HepG2 (cell line): ENCODE measurements at regions of chr5 and their contacts with region 1.

Region 1: GRCh38 chr5:112419986-112420864 is 1.1 kb upstream of the EPB41L4A start:
- DNase-seq: peak; percentile 41
- ATAC-seq: peak; percentile 99
- H3K4me3 ChIP-seq: peak overlapping the region; percentile 42 to 79 (median 75)
- H3K27ac ChIP-seq: no peak overlapping the region
- H3K4me1 ChIP-seq: 0 out of 2 replicates have a peak, but pooled peaks cover 5% of the 10 kb centered on the region
- H3K27me3 ChIP-seq: peaks cover 4 to 30% of the 10 kb centered on the region in 2 experiments; a peak in 4 of 5 replicates
- CTCF ChIP-seq: peak; percentile 97
- EP300 ChIP-seq: no peak
- POLR2A ChIP-seq: no peak
- RAD21 ChIP-seq: peak; percentile 88

Region 2: DNA sequence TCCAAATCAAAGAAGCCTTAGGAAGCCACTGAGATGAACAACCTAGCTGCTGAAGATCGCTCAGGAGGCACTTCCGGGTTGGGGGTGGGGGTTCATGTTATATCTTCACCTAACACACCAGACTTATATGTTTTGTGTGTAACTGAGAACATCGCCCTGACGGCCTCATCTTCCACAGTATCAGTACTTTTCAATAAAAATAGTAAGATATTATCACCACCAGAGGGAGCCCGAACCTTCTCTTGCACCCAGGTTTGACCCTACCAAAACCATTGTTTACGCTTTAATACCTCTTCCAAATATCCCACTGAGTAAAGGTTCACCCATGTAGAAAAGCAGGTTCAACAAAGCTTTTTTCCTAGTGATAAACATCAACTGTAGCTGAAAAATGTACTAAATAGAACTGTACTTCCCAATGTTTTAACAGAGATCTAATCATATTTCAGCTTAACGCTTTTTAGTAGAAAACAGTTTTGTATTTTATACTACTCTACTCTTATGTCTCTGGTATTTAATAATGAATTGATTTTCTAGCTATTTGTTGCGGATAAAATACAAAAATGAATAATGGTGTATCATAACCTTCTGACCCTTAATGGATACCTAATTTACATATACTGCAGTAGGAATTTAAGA is 245.1 kb before region 1 on chr5:
- CTCF ChIA-PET with region 1: interaction called, 12 read pairs
- POLR2A ChIA-PET with region 1: no interaction called
- in situ Hi-C with region 1: loop called (anchors 10 kb)
- intact Hi-C with region 1: loop called (anchors 1 kb)
- DNase-seq: peak; percentile 18
- ATAC-seq: peak; percentile 76
- H3K4me3 ChIP-seq: no peak overlapping the region
- H3K27ac ChIP-seq: no peak overlapping the region
- H3K4me1 ChIP-seq: no peaks in the 10 kb centered on the region
- H3K27me3 ChIP-seq: no peaks in the 10 kb centered on the region; a peak in 1 of 5 replicates
- CTCF ChIP-seq: peak; percentile 65
- EP300 ChIP-seq: no peak
- POLR2A ChIP-seq: no peak
- RAD21 ChIP-seq: no peak

Region 3: GRCh38 chr5:112186401-112186990 is 233.7 kb before region 1 on chr5:
- CTCF ChIA-PET with region 1: no interaction called
- POLR2A ChIA-PET with region 1: no interaction called
- in situ Hi-C with region 1: loop called (anchors 10 kb)
- intact Hi-C with region 1: no loop called
- DNase-seq: peak; percentile 35
- ATAC-seq: peak; percentile 69
- H3K4me3 ChIP-seq: no peak overlapping the region
- H3K27ac ChIP-seq: no peak overlapping the region
- H3K4me1 ChIP-seq: no peaks in the 10 kb centered on the region
- H3K27me3 ChIP-seq: 0 out of 5 replicates have a peak, but pooled peaks cover 0 to 4% of the 10 kb centered on the region in 2 experiments
- CTCF ChIP-seq: peak; percentile 47
- EP300 ChIP-seq: no peak
- POLR2A ChIP-seq: no peak
- RAD21 ChIP-seq: no peak

Region 4: DNA sequence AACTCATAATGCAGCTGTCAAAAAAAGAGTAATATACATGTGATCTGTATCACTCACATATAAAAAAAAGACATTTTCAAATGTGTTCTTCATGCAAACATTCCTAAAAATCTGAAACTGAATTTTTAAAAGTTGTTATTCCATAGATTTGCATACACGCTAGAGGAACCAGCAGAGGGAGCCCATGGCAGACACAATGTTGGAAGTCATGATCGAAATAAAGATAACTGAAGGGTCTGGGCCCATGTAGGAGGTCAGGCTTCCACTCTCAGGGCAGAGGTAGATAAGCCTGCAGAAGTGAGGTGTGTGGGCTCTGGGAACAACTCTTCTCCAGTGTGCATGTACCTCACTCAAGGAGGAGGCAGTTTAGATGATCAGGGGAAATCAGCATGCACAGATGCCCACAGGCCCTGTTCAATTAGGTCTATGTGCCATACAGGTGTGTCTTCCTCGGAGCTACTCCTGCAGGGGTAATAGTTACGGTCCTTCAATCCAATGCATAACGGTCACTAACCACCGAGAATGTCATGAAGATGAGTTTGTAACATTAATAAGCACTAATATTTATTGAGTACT is 209.7 kb before region 1 on chr5:
- CTCF ChIA-PET with region 1: interaction called, 13 read pairs
- POLR2A ChIA-PET with region 1: no interaction called
- in situ Hi-C with region 1: loop called (anchors 10 kb)
- intact Hi-C with region 1: loop called (anchors 1 kb)
- DNase-seq: peak; percentile 37
- ATAC-seq: peak; percentile 84
- H3K4me3 ChIP-seq: no peak overlapping the region
- H3K27ac ChIP-seq: no peak overlapping the region
- H3K4me1 ChIP-seq: no peaks in the 10 kb centered on the region
- H3K27me3 ChIP-seq: 0 out of 5 replicates have a peak, but pooled peaks cover 0 to 3% of the 10 kb centered on the region in 2 experiments
- CTCF ChIP-seq: peak; percentile 61
- EP300 ChIP-seq: no peak
- POLR2A ChIP-seq: no peak
- RAD21 ChIP-seq: 0 out of 2 replicates have a peak, but pooled peaks have one; percentile 19